ENCODE measurements at regions of chr9 and their contacts with region 1.

Region 1: DNA sequence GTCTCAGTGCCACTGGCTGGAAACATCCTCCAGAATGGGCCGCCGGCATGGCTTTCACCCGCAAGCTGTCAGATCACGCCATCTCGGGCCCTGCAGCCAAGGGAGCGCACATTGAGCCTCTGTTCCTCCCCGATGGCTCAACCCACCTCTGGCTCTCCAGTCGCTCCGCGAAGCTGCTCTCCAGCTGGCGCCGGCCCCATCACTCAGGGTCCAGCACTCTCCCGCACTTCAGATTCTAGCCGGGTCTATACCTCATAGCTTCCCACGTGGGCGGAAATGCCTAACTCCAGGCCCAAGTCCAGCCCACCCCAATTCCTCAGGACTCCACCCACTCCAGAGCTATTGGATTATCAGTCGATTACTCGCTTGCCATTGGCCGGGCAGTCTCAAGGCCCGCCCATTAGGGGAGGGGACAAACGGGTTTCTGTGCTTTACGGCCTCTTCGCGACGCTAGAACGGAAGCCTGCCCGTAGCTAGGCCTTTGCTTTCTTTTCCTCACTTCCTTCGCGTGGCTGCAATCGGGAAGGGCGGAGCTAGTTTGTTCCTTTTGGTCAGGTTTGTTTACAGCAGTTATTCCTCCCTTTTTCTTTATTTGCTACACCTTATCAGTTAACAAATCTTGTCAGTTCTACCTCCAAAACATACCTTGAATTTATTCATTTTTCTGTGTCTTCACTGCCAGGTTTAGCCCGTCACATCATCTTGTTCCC is at the start of gene NOL6:
- DNase-seq: peak; percentile 99
- H3K4me3 Mint-ChIP-seq: peak within 1 kb of the TSS; percentile 99
- H3K27ac Mint-ChIP-seq: peak within 1 kb of the TSS; percentile 93
- H3K4me1 Mint-ChIP-seq: peaks cover 24% of the 10 kb centered on the region
- H3K27me3 Mint-ChIP-seq: no peaks in the 10 kb centered on the region
- total RNA-seq, gene NOL6: 38.1 to 39.7 TPM

Region 2: GRCh38 chr9:33404788-33405362 is 68.9 kb before region 1 on chr9:
- CTCF ChIA-PET with region 1: interaction called, 113 read pairs
- POLR2A ChIA-PET with region 1: no interaction called
- intact Hi-C with region 1: loop called (anchors 2 kb)
- DNase-seq: no peak
- H3K4me3 Mint-ChIP-seq: no peak overlapping the region
- H3K27ac Mint-ChIP-seq: no peak overlapping the region
- H3K4me1 Mint-ChIP-seq: peaks cover 7% of the 10 kb centered on the region
- H3K27me3 Mint-ChIP-seq: no peaks in the 10 kb centered on the region

Region 3: DNA sequence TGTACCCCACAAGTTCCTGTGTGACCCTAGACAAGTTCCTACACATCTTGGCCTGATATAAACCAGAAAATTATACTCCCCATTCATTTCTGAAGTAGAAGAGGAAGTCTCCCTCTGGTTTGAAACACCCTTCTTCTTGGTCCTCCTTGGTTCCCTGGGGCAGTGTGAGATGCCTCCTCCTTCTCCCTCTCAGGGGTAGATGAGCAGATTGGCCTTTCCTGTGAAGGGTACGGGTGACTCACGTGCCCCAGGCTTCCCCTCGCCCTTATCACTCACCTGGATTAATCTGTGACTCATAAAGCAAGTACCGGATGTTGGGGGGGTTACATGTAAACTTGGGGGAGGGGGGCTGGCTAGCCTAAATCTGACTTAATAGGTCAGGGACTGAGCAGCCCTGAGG is 15.4 kb before region 1 on chr9:
- CTCF ChIA-PET with region 1: interaction called, 386 read pairs
- POLR2A ChIA-PET with region 1: interaction called, 12 read pairs
- intact Hi-C with region 1: loop called (anchors 1 kb)
- DNase-seq: peak; percentile 84
- H3K4me3 Mint-ChIP-seq: peak overlapping the region; percentile 13
- H3K27ac Mint-ChIP-seq: peak overlapping the region; percentile 89
- H3K4me1 Mint-ChIP-seq: peaks cover 58% of the 10 kb centered on the region
- H3K27me3 Mint-ChIP-seq: no peaks in the 10 kb centered on the region

Region 4: GRCh38 chr9:33510264-33511183 is 36.7 kb after region 1 on chr9:
- CTCF ChIA-PET with region 1: interaction called, 3 read pairs
- POLR2A ChIA-PET with region 1: interaction called, 3 read pairs
- intact Hi-C with region 1: loop called (anchors 5 kb)
- DNase-seq: peak; percentile 58
- H3K4me3 Mint-ChIP-seq: peak overlapping the region; percentile 88
- H3K27ac Mint-ChIP-seq: peak overlapping the region; percentile 73
- H3K4me1 Mint-ChIP-seq: peaks cover 18% of the 10 kb centered on the region
- H3K27me3 Mint-ChIP-seq: peaks cover 1% of the 10 kb centered on the region

Measured in activated CD4-positive, alpha-beta memory T cell treated with anti-CD3 and anti-CD28 coated beads for 36 hours (primary cell).